B cell (primary cell): ENCODE measurements at regions of chr2 and their contacts with region 1.

Region 1: DNA sequence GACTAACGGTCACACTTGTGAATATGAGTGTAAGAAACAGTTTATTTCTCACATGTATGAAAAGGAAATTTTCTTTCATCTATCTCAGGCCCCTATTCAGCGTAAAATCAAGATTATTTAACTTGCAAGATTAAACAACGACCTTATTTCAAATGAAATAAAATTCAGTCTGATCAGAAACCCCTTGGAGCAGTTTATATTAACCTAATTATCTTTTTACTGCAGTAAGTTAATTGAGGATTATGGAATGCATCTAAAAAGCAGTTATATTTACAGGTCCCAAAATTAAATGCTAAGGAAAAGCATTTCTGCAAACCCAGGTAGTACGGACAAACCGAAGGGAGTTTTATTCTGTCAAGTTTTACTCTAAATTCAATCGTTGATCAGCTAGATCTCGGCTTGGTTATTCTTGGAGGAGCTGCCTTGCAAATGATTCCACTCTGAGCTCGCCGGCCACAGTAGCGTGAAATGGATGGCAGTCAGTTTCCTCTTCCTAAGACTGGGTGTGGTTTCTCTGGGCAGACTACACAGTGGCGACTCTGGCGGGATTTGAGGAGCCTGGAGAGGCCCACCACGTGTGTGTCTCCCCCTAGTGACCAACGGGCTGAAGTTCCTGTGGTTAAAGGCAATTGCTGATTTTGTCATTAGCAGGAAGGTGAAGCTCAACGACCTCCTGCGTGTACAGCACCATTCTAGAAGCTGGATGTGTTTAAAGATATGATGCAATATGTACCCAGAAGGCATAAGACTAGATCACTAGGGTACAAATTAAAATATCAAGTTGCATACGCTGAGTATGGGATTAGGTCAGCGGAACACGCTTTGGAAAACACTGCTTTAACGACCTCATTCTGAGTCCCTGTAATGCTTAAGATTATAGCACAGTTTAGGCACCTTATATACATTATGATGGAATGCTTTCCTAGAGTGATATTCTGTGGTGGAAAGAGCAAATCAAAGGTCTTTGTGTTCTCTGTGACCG is 36.4 kb downstream of the PRKRA start:
- DNase-seq: peak; percentile 85
- ATAC-seq: peak; percentile 73
- H3K4me3 ChIP-seq: peak overlapping the region; percentile 52 to 96 (median 71)
- H3K4me3 Mint-ChIP-seq: peak overlapping the region; percentile 88
- H3K27ac ChIP-seq: peak overlapping the region; percentile 57 to 78
- H3K27ac Mint-ChIP-seq: peak overlapping the region; percentile 93
- H3K4me1 ChIP-seq: peaks cover 10 to 15% of the 10 kb centered on the region in 2 donors
- H3K4me1 Mint-ChIP-seq: peaks cover 19% of the 10 kb centered on the region
- H3K27me3 ChIP-seq: no peaks in the 10 kb centered on the region
- H3K27me3 Mint-ChIP-seq: no peaks in the 10 kb centered on the region
- CTCF ChIP-seq: peak; percentile 95

Region 2: DNA sequence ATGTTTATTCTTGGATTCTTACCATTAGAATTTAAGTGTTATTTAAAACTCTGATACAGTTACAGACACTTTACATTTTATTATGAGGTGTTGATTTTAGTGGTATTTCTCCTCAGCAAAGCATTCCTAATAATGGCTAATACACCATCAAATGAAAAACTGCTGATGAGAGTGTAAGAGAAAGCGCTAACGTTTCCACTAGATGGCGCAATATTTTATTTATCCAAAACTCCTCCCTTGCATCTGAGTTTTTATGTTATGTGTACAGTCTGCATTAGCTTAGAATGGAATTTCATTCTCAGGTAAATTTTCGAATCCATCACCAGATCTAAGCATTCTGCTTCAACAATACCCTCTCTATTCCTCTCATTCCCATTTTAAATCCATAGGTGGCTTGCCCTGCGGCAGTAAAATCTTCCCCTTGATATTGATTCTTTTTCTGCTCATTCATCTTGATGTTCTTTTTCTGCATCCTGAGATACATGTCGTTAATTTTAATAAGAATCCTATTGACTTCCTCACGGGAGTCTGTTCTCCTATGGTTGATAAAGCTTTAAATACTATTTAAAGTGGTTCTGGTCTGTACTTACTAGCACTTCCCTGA is 17.5 kb before region 1 on chr2:
- CTCF ChIA-PET with region 1: interaction called, 126 read pairs
- POLR2A ChIA-PET with region 1: no interaction called
- intact Hi-C with region 1: loop called (anchors 1 kb)
- DNase-seq: peak; percentile 60
- ATAC-seq: peak; percentile 49
- H3K4me3 ChIP-seq: no peak overlapping the region
- H3K4me3 Mint-ChIP-seq: no peak overlapping the region
- H3K27ac ChIP-seq: no peak overlapping the region
- H3K27ac Mint-ChIP-seq: no peak overlapping the region
- H3K4me1 ChIP-seq: no peaks in the 10 kb centered on the region
- H3K4me1 Mint-ChIP-seq: no peaks in the 10 kb centered on the region
- H3K27me3 ChIP-seq: no peaks in the 10 kb centered on the region
- H3K27me3 Mint-ChIP-seq: no peaks in the 10 kb centered on the region
- CTCF ChIP-seq: peak; percentile 87

Region 3: DNA sequence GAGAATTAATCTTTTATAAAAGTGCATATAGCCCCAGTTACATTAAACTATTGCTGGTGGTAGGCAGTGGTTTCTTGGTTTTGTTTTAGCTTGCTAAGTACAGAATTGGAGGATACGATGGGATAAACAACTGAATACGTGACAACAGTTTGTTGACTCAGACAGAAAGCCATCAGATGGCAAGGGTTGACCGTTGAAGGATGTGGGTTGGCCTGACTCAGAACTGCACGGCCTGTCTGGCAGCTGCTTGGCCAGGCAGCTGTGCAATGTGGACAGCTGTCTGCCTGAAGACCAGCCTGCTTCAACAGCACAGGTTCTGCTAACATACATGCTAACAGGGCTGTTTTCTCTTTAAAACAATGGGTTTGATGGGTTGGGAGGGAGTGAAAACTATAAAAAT is 10.2 kb before region 1 on chr2:
- CTCF ChIA-PET with region 1: interaction called, 126 read pairs
- POLR2A ChIA-PET with region 1: no interaction called
- intact Hi-C with region 1: no loop called
- DNase-seq: no peak
- ATAC-seq: no peak
- H3K4me3 ChIP-seq: no peak overlapping the region
- H3K4me3 Mint-ChIP-seq: no peak overlapping the region
- H3K27ac ChIP-seq: no peak overlapping the region
- H3K27ac Mint-ChIP-seq: no peak overlapping the region
- H3K4me1 ChIP-seq: no peaks in the 10 kb centered on the region
- H3K4me1 Mint-ChIP-seq: peaks cover 6% of the 10 kb centered on the region
- H3K27me3 ChIP-seq: no peaks in the 10 kb centered on the region
- H3K27me3 Mint-ChIP-seq: no peaks in the 10 kb centered on the region
- CTCF ChIP-seq: no peak

Region 4: GRCh38 chr2:178426388-178426787 is 11.8 kb after region 1 on chr2:
- CTCF ChIA-PET with region 1: interaction called, 37 read pairs
- POLR2A ChIA-PET with region 1: interaction called, 4 read pairs
- intact Hi-C with region 1: no loop called
- DNase-seq: no peak
- ATAC-seq: no peak
- H3K4me3 ChIP-seq: no peak overlapping the region
- H3K4me3 Mint-ChIP-seq: no peak overlapping the region
- H3K27ac ChIP-seq: no peak overlapping the region
- H3K27ac Mint-ChIP-seq: no peak overlapping the region
- H3K4me1 ChIP-seq: no peaks in the 10 kb centered on the region
- H3K4me1 Mint-ChIP-seq: no peaks in the 10 kb centered on the region
- H3K27me3 ChIP-seq: no peaks in the 10 kb centered on the region
- H3K27me3 Mint-ChIP-seq: no peaks in the 10 kb centered on the region
- CTCF ChIP-seq: no peak

Region 5: DNA sequence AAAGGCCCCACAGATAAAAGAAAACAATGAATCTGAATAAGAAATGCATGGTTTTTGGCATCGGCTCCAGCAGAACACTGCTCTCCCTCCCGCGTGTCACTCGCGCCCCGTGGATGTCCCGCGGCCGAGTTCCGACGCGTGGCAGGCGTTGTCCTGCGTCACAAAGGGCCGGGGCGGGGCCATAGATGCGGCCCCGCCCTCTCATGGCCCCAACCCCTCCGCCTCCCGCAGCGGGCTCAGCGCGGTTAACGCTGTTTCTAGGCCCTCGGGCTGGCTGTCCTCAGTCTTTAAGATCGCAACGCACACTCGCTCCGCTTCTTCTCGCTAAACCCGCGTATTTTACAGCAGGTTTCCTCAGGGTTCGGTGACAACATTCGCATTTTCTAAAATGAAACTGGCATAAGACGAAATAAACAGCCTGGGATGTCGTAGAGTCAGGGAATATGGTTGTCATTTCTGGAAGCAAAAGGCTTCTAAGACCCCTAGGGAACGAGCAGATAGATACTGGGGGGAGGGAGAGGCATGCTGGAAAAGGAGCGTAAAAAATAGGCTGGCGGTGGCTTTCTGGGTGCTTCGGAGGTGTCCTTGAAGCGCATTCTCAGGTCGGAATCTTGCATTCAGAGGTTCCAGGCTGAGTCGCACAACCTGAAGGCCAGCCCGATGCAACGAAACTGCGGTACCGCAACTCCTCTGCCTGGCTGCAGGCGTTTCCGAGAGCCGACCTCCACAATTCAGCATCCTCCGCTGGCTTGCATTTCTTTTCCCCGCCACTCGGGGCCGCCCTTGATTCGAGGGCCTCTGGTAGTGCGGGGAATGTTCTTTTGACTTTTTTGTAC is 64.1 kb after region 1 on chr2 and contains the start of gene FKBP7:
- CTCF ChIA-PET with region 1: interaction called, 9 read pairs
- POLR2A ChIA-PET with region 1: no interaction called
- intact Hi-C with region 1: loop called (anchors 1 kb)
- DNase-seq: peak; percentile 93
- ATAC-seq: peak; percentile 74
- H3K4me3 ChIP-seq: peak within 1 kb of the TSS; percentile 76 to 100 (median 98)
- H3K4me3 Mint-ChIP-seq: peak within 1 kb of the TSS; percentile 98
- H3K27ac ChIP-seq: peak within 1 kb of the TSS; percentile 86 to 90
- H3K27ac Mint-ChIP-seq: peak within 1 kb of the TSS; percentile 97
- H3K4me1 ChIP-seq: peaks cover 32 to 34% of the 10 kb centered on the region in 2 donors
- H3K4me1 Mint-ChIP-seq: peaks cover 41% of the 10 kb centered on the region
- H3K27me3 ChIP-seq: no peaks in the 10 kb centered on the region
- H3K27me3 Mint-ChIP-seq: no peaks in the 10 kb centered on the region
- CTCF ChIP-seq: peak; percentile 78
- total RNA-seq, gene FKBP7: 0.39 and 1.7 TPM in 2 replicates